Activated naive CD4-positive, alpha-beta T cell treated with anti-CD3 and anti-CD28 coated beads for 36 hours (primary cell): ENCODE measurements at regions of chr19 and their contacts with region 1.

Region 1: GRCh38 chr19:40444192-40445028 is at the start of gene SERTAD3:
- DNase-seq: peak; percentile 96
- H3K4me3 Mint-ChIP-seq: peak within 1 kb of the TSS; percentile 97
- H3K27ac Mint-ChIP-seq: peak within 1 kb of the TSS; percentile 92
- H3K4me1 Mint-ChIP-seq: peaks cover 19% of the 10 kb centered on the region
- H3K27me3 Mint-ChIP-seq: no peaks in the 10 kb centered on the region
- total RNA-seq, gene SERTAD3: 3.8 to 7.3 TPM

Region 2: GRCh38 chr19:40035996-40036395 is 408.4 kb before region 1 on chr19:
- CTCF ChIA-PET with region 1: no interaction called
- intact Hi-C with region 1: no loop called
- DNase-seq: no peak
- H3K4me3 Mint-ChIP-seq: no peak overlapping the region
- H3K27ac Mint-ChIP-seq: no peak overlapping the region
- H3K4me1 Mint-ChIP-seq: no peaks in the 10 kb centered on the region
- H3K27me3 Mint-ChIP-seq: no peaks in the 10 kb centered on the region

Region 3: GRCh38 chr19:40190891-40191835 is 253.2 kb before region 1 on chr19 and contains the start of gene MAP3K10:
- CTCF ChIA-PET with region 1: no interaction called
- intact Hi-C with region 1: loop called (anchors 1 kb)
- DNase-seq: peak; percentile 79
- H3K4me3 Mint-ChIP-seq: peak within 1 kb of the TSS; percentile 85
- H3K27ac Mint-ChIP-seq: peak within 1 kb of the TSS; percentile 91
- H3K4me1 Mint-ChIP-seq: peaks cover 30% of the 10 kb centered on the region
- H3K27me3 Mint-ChIP-seq: no peaks in the 10 kb centered on the region
- total RNA-seq, gene MAP3K10: 8.4 to 9.3 TPM

Region 4: GRCh38 chr19:40348125-40348913 is 96.1 kb before region 1 on chr19 and contains the starts of genes C19orf47 and PLD3:
- CTCF ChIA-PET with region 1: no interaction called
- intact Hi-C with region 1: loop called (anchors 1 kb)
- DNase-seq: peak; percentile 99
- H3K4me3 Mint-ChIP-seq: peak within 1 kb of the TSS; percentile 89
- H3K27ac Mint-ChIP-seq: peak within 1 kb of the TSS; percentile 78
- H3K4me1 Mint-ChIP-seq: peaks cover 29% of the 10 kb centered on the region
- H3K27me3 Mint-ChIP-seq: no peaks in the 10 kb centered on the region
- total RNA-seq, gene C19orf47: 13.5 to 14.6 TPM
- total RNA-seq, gene PLD3: 57.6 to 58.2 TPM

Region 5: DNA sequence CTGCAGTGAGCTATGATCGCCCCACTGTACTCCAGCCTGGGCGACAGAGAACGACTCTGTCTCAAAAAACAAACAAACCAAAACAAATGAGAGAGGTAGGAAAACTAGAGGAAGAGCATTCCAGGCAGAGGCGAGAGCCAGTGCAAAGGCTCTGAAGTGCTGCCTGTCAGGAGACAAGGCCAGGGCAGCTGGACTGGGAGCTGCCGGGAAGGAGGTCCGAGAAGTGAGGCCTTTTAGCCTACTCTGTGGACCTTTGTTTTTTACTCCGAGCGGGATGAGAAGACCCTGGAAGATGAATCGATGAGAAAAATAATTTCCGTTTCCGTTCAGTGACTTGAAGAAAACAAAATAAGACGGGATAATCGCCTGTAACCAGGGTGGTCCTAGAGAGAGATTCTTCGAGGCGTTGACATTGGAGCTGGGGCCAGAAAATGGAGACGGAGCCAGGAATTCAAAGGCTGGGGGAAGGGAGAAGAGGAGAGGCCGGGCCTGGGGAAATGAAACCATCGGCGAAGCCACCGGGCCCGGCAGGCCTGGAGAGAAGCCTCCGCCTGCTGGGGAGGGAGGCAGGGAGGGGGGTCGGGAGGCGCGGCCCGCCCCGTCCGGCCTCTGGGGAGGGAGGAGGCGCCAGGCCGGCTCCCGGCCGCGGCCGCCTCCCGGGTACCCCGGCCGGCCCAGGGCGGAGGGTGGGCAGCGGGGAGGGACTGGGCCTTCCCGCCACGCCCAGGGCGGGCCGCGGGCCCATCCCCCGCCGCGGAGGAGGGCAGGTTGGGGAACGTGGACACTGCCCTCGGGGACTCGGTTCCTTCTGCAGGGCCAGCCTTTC is 10.8 kb before region 1 on chr19:
- CTCF ChIA-PET with region 1: interaction called, 4 read pairs
- intact Hi-C with region 1: loop called (anchors 1 kb)
- DNase-seq: peak; percentile 64
- H3K4me3 Mint-ChIP-seq: peak overlapping the region; percentile 88
- H3K27ac Mint-ChIP-seq: peak overlapping the region; percentile 91
- H3K4me1 Mint-ChIP-seq: peaks cover 10% of the 10 kb centered on the region
- H3K27me3 Mint-ChIP-seq: no peaks in the 10 kb centered on the region

Region 6: GRCh38 chr19:40502647-40503319 is 58.4 kb after region 1 on chr19:
- CTCF ChIA-PET with region 1: no interaction called
- intact Hi-C with region 1: no loop called
- DNase-seq: no peak
- H3K4me3 Mint-ChIP-seq: no peak overlapping the region
- H3K27ac Mint-ChIP-seq: no peak overlapping the region
- H3K4me1 Mint-ChIP-seq: peaks cover 4% of the 10 kb centered on the region
- H3K27me3 Mint-ChIP-seq: peaks cover 8% of the 10 kb centered on the region

Region 7: DNA sequence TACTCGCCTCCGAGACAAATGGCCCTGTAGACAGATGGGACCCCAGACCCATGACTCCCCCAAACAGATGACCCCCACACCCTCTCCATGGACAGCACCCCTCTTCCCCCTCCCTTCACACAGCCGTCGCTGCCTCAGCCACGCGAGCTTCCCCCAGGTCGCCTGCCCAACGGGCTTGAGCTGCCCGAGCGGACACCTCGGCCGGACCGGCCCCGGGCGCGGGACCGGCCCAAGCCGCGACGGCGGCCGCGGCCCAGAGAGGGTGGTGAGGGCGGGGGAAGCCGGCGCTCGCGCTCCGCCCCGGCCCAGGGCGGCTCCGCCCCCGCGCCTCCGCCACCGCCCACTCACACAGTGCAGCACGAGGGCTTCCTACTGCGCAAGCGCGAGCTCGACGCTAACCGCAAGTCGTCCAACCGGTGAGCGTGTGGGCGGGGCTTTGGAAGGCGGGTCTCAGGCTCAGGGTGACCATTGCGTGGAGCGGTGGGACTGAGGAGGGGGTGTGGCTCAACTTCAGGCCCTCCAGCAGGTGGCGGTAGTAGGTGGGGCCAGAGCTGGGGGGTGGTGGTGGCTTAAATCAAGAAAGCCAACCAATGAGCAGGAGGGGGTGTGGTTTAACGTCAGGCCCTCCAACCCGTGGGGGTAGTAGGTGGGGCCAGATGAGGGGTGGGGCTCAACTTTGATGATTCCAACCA is 126.0 kb after region 1 on chr19:
- CTCF ChIA-PET with region 1: no interaction called
- intact Hi-C with region 1: no loop called
- DNase-seq: peak; percentile 96
- H3K4me3 Mint-ChIP-seq: peak overlapping the region; percentile 64
- H3K27ac Mint-ChIP-seq: peak overlapping the region; percentile 41
- H3K4me1 Mint-ChIP-seq: peaks cover 15% of the 10 kb centered on the region
- H3K27me3 Mint-ChIP-seq: peaks cover 25% of the 10 kb centered on the region

Region 8: DNA sequence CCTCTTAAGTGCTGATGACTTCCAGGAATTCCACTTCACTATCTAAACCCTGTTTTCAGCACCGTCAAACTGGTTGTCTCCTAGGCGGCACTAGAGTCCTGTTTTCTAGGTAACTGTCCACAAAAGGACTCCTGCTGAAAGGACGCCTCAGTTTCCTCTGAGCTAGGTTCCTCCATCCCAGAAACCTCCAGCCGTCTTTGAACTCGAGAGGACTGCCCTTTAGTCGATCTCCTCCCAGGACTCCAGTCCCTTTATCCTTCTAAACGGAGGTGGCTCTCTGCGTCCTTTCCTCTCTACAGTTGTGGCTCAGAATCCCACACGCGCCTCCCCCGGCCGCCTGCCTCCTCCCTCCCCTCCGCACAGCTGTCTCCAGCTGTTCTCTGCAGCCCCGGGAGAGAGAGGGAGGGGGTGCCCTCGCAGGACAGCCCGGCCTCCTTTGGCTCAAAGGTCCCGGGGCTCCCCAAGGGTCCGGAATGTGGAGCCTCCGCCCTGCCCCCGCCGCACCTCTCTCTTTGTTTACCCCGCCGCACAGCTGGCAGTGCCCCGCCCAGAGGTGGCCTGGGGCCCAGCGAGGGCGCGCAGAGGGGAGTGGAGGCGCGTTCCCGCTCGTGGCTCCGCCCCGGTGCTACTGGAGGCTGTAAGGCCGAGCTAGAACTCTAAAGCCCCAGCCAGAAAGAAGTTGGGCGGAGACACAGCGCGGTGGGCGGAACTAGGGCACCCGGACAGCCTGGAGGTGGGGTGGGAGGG is 159.2 kb after region 1 on chr19:
- CTCF ChIA-PET with region 1: interaction called, 3 read pairs
- intact Hi-C with region 1: loop called (anchors 1 kb)
- DNase-seq: peak; percentile 98
- H3K4me3 Mint-ChIP-seq: peak overlapping the region; percentile 79
- H3K27ac Mint-ChIP-seq: no peak overlapping the region
- H3K4me1 Mint-ChIP-seq: peaks cover 67% of the 10 kb centered on the region
- H3K27me3 Mint-ChIP-seq: peaks cover 28% of the 10 kb centered on the region

Region 9: GRCh38 chr19:40777937-40778705 is 333.7 kb after region 1 on chr19 and contains the start of gene RAB4B:
- CTCF ChIA-PET with region 1: no interaction called
- intact Hi-C with region 1: loop called (anchors 1 kb)
- DNase-seq: peak; percentile 100
- H3K4me3 Mint-ChIP-seq: peak within 1 kb of the TSS; percentile 85
- H3K27ac Mint-ChIP-seq: peak within 1 kb of the TSS; percentile 91
- H3K4me1 Mint-ChIP-seq: peaks cover 39% of the 10 kb centered on the region
- H3K27me3 Mint-ChIP-seq: no peaks in the 10 kb centered on the region
- total RNA-seq, gene RAB4B: 40.0 to 40.3 TPM